Right cardiac atrium (tissue), 5 donors: ENCODE measurements at regions of chr7 and their contacts with region 1.

Region 1: GRCh38 chr7:101058355-101058754 is 26.9 kb upstream of the TRIM56 start:
- DNase-seq: peak; percentile 61 to 86 (median 85)
- ATAC-seq: peak; percentile 68 to 69
- H3K4me3 ChIP-seq: no peak overlapping the region
- H3K27ac ChIP-seq: no peak overlapping the region
- H3K4me1 ChIP-seq: no peaks in the 10 kb centered on the region
- H3K27me3 ChIP-seq: no peaks in the 10 kb centered on the region

Region 2: DNA sequence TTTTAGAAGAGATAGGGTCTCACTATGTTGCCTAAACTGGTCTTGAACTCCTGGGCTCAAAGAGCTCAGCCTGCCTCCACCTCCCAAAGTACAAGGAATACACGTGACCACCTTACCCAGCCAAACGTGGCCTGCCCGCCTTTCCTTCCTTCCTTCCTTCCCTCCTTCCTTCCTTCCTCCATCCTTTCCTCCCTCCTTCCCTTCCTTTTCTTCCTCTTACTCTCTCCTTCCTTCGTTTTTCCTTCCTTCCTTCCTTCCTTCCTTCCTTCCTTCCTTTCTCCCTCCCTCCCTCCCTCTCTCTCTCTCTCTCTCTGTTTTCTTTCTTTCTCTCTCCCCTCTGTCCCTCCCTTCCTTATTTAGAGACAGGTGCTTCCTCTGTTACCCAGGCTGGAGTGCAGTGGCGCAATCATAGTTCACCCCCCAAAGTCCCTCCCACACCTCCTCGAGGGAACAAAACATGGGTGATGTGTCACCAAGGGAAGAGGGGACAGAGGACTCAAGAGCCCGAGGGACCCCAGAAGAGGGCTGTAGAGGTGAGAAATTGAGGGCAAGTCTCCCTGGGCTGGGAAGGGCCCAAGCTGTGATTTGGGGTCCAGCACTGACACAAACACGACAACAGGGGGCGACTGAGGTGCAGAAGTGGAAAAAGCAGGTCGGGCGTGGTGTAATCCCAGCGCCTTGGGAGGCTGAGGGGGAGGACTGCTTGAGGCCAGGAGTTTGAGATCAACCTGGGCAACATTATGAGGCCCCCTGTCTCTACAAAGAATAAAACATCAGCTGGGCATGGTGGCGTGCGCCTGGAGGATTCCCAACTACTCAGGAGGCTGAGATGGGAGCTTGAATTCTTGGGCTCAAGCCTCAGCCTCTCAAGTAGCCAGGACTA is 259.1 kb before region 1 on chr7:
- intact Hi-C with region 1: no loop called
- DNase-seq: peak; percentile 66 to 86 (median 83)
- ATAC-seq: peak; percentile 42 to 48
- H3K4me3 ChIP-seq: no peak overlapping the region
- H3K27ac ChIP-seq: no peak overlapping the region
- H3K4me1 ChIP-seq: peaks cover 4% of the 10 kb centered on the region
- H3K27me3 ChIP-seq: no peaks in the 10 kb centered on the region

Region 3: GRCh38 chr7:100889761-100890634 is 168.4 kb before region 1 on chr7:
- intact Hi-C with region 1: loop called in 2 of 4 experiments (anchors 5 kb)
- DNase-seq: peak; percentile 96 to 98 (median 98)
- ATAC-seq: peak; percentile 92 to 93
- H3K4me3 ChIP-seq: peak overlapping the region; percentile 51
- H3K27ac ChIP-seq: peak overlapping the region; percentile 88
- H3K4me1 ChIP-seq: peaks cover 4% of the 10 kb centered on the region
- H3K27me3 ChIP-seq: no peaks in the 10 kb centered on the region

Region 4: GRCh38 chr7:100896732-100897608 is 161.4 kb before region 1 on chr7:
- intact Hi-C with region 1: loop called (anchors 2 to 5 kb)
- DNase-seq: peak; percentile 71 to 82 (median 79)
- ATAC-seq: peak; percentile 39 to 40
- H3K4me3 ChIP-seq: peak overlapping the region; percentile 29
- H3K27ac ChIP-seq: no peak overlapping the region
- H3K4me1 ChIP-seq: no peaks in the 10 kb centered on the region
- H3K27me3 ChIP-seq: no peaks in the 10 kb centered on the region

Region 5: GRCh38 chr7:100965723-100966541 is 92.4 kb before region 1 on chr7:
- intact Hi-C with region 1: loop called in 1 of 4 experiments (anchors 5 kb)
- DNase-seq: peak; percentile 63 to 84 (median 83)
- ATAC-seq: peak; percentile 50 to 64
- H3K4me3 ChIP-seq: peak overlapping the region; percentile 5
- H3K27ac ChIP-seq: no peak overlapping the region
- H3K4me1 ChIP-seq: no peaks in the 10 kb centered on the region
- H3K27me3 ChIP-seq: no peaks in the 10 kb centered on the region

Region 6: DNA sequence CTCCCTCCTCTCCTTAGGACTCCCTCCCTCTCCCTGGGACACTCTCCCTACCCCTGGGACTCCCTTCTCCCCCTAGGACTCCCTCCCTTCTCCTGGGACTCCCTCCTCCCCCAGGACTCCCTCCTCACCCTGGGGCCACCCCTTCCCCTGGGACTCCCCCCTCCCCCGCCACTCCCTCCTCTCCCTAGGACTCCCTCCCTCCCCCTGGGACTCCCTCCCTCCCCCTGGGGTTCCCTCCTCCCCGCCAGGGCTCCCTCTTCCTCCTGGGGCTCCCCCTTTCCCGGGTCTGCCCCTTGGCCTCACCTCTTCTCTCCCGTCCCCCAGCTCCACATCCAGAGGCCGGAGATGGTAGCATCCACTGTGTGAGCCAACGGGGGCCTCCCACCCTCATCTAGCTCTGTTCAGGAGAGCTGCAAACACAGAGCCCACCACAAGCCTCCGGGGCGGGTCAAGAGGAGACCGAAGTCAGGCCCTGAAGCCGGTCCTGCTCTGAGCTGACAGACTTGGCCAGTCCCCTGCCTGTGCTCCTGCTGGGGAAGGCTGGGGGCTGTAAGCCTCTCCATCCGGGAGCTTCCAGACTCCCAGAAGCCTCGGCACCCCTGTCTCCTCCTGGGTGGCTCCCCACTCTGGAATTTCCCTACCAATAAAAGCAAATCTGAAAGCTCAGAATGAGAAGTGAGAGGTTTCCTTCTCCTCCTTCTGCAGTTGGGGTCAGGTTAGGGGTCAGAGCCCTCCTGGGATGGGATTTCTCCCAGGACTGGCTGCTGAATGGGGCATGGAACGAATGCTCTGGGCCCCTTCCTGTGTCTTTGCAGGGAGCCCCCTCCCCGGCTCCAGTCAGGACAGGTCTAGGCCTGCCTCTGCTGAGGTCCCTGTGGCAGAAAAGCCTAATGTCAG is 39.8 kb before region 1 on chr7:
- intact Hi-C with region 1: no loop called
- DNase-seq: no peak
- ATAC-seq: no peak
- H3K4me3 ChIP-seq: no peak overlapping the region
- H3K27ac ChIP-seq: no peak overlapping the region
- H3K4me1 ChIP-seq: no peaks in the 10 kb centered on the region
- H3K27me3 ChIP-seq: no peaks in the 10 kb centered on the region